Heart right ventricle (tissue), 16 donors: ENCODE measurements at regions of chr1 and their contacts with region 1.

Region 1: DNA sequence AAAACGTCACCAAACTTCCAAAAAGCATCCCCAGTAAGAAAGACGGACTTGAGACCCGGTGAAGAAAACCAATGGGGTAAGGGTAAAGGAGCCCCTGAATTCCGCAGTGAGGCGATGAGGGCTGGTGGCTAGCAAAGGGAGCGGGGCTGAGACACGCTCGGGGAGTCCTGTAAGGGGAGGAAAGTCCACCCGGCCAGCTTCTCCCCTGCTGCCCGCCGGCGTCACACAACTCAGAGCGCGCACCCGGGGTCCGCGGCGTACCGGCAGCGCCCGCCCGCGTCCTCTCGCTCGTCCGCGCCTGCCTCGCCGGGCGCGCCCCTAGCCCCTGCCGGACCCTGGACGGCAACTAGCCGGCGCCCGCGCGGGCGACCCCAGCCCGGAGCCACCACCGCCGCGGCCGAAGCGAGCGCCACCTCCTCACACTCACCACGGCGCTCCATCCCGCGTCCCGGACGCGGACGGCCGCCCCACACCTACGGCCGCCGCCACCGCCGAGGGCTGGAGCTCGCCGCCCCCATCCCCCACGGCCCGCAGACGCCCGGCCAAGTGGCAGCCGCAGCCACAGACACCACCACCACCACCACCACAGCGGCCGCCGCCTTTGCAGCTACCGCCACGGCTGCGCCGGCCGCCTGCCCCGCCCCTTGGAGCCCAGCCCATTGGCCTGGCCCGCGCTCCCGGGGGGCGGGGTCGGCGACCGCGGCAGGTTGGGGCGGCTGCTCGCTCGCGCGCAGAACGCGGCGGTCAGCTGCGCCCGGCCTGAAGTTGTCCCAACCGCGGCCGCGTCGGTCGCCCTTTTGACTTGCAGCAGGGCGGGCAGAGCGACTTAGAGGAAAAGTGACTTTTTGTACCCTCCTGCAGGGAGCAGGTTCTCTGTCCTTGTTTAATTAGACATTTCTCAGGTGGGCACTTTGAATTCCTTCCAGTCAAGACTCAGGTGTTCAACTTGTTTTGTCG is 10.0 kb upstream of the ARHGAP29 start:
- DNase-seq: peak; percentile 81 to 89
- ATAC-seq: peak; percentile 87 to 97 (median 94)
- H3K4me3 ChIP-seq: peak overlapping the region; percentile 57 to 88 (median 68)
- H3K27ac ChIP-seq: peak overlapping the region; percentile 84 to 96 (median 90)
- H3K4me1 ChIP-seq: peaks cover 0 to 15% (median 6%) of the 10 kb centered on the region in 9 donors
- H3K27me3 ChIP-seq: peaks cover 0 to 65% (median 0%) of the 10 kb centered on the region in 7 donors
- CTCF ChIP-seq: peak in 1 of 9 donors; percentile 6

Region 2: GRCh38 chr1:93964777-93965200 is 282.6 kb before region 1 on chr1:
- intact Hi-C with region 1: no loop called
- DNase-seq: no peak
- ATAC-seq: no peak
- H3K4me3 ChIP-seq: no peak overlapping the region
- H3K27ac ChIP-seq: no peak overlapping the region
- H3K4me1 ChIP-seq: peaks cover 0 to 7% (median 0%) of the 10 kb centered on the region in 9 donors
- H3K27me3 ChIP-seq: no peaks in the 10 kb centered on the region
- CTCF ChIP-seq: no peak

Region 3: DNA sequence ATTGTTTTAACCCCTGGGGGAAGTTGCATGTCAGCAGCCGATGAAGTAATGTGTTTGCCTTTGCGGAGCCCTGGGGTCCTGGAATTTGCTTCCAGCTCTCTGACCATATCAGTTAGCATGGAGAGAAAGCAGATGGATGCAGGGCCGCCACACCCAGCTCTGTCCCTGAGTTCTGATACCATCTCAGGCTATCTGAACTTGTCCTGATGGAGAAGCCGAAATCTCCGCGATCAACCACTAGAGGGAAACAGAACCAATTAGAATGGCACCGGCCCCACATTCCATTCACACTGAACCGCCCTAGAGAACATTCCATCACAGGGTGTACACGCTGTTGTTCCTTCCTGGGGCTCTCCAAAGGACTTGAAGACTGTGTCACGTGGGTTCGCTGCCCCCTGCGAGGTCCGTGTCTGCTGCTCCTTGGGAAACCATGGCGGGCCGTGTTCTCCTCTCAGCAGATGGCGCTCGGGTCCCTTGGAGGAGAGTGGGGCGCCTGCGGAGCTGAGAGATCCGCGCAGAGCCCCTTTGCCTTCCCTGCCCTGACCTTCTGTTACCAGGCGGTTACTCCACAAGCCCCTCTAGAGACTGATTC is 201.9 kb before region 1 on chr1:
- intact Hi-C with region 1: loop called in 1 of 10 experiments (anchors 5 kb)
- DNase-seq: peak; percentile 88 to 94
- ATAC-seq: peak; percentile 88 to 95 (median 92)
- H3K4me3 ChIP-seq: peak overlapping the region in 5 of 10 donors; percentile 8 to 21 (median 12)
- H3K27ac ChIP-seq: peak overlapping the region; percentile 81 to 98 (median 92)
- H3K4me1 ChIP-seq: peaks cover 23 to 85% (median 64%) of the 10 kb centered on the region in 9 donors
- H3K27me3 ChIP-seq: no peaks in the 10 kb centered on the region
- CTCF ChIP-seq: peak; percentile 50 to 89 (median 73)

Region 4: DNA sequence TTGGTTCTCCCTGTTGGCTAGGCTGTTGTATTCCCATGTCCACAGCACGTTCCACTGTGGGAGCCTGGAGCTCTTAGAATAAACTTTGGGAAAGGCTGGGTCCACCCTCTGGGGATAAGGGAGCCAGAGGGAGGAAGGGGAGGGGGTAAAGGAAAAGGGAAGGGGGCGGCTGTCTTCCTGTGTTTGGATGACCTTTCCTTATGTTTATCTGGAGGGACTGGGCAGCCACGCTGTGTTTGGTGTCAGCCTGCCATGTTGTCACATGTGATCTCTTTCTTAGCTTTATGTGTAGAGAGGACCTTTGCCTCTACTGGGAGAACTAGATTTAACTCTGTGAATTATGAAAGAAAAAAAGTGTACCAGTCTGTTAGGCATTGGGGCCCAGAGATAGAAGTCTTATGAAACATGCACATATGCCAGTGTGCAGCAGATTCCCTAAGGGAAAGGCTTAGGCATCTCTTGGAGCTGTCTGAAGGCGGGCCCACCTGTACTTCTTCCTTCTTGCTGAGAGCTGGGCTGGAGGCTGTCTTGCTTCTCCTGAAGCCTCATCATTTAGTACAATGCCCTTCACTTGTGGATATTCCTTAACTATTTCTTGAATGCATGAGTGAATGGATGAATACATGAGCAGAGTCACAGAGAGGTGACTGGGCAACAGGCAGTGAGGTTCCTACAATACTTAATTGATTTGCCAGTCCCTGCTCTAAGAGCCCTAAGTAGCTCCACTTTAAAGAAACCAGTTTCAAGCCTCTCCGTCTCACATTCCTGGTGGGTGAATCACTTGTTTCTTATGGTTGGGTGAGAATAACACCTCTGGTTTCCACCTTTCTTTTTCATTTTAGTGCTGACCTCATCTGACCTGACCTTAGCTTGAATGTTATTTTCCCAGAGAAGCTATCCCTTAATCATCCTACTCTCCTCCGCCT is 52.5 kb after region 1 on chr1:
- intact Hi-C with region 1: loop called in 6 of 10 experiments (anchors 2 to 10 kb)
- DNase-seq: peak; percentile 24 to 41
- ATAC-seq: peak in 7 of 8 donors; percentile 52 to 75 (median 71)
- H3K4me3 ChIP-seq: no peak overlapping the region
- H3K27ac ChIP-seq: peak overlapping the region; percentile 52 to 84 (median 72)
- H3K4me1 ChIP-seq: peaks cover 0 to 90% (median 64%) of the 10 kb centered on the region in 9 donors
- H3K27me3 ChIP-seq: no peaks in the 10 kb centered on the region
- CTCF ChIP-seq: no peak

Region 5: DNA sequence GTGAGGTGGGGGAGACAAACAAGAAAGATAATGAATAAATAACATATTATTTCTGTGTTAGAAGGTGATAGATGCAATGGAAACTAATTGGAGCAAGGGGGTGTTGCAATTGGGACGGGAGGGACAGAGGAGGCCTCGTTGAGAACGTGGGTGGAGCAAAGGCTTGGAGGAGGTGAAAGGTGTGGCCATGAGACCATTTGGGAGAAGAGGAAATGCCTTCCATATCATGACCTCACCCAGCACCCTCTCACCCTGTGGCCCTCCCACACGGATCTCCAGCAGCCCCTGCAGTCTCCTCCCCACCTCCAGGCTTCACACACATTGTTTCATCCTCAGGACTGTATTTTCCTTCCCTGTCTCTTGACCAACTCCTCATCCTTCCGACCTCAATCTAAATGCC is 75.3 kb after region 1 on chr1:
- intact Hi-C with region 1: loop called in 7 of 10 experiments (anchors 2 to 10 kb)
- DNase-seq: no peak
- ATAC-seq: peak in 1 of 8 donors; percentile 31
- H3K4me3 ChIP-seq: no peak overlapping the region
- H3K27ac ChIP-seq: peak overlapping the region in 9 of 10 donors; percentile 24 to 91 (median 53)
- H3K4me1 ChIP-seq: peaks cover 7 to 84% (median 65%) of the 10 kb centered on the region in 9 donors
- H3K27me3 ChIP-seq: peaks cover 0 to 3% (median 0%) of the 10 kb centered on the region in 7 donors
- CTCF ChIP-seq: no peak